Caco-2 (cell line): ENCODE measurements at regions of chr5 and their contacts with region 1.

Region 1: GRCh38 chr5:151825445-151825844 is 53.7 kb downstream of the G3BP1 start:
- DNase-seq: peak; percentile 70
- H3K4me3 ChIP-seq: no peak overlapping the region
- H3K4me3 Mint-ChIP-seq: no peak overlapping the region
- H3K27ac Mint-ChIP-seq: no peak overlapping the region
- H3K4me1 ChIP-seq: no peaks in the 10 kb centered on the region
- H3K4me1 Mint-ChIP-seq: no peaks in the 10 kb centered on the region
- H3K27me3 ChIP-seq: no peaks in the 10 kb centered on the region
- H3K27me3 Mint-ChIP-seq: no peaks in the 10 kb centered on the region
- CTCF ChIP-seq: peak; percentile 78 to 83

Region 2: DNA sequence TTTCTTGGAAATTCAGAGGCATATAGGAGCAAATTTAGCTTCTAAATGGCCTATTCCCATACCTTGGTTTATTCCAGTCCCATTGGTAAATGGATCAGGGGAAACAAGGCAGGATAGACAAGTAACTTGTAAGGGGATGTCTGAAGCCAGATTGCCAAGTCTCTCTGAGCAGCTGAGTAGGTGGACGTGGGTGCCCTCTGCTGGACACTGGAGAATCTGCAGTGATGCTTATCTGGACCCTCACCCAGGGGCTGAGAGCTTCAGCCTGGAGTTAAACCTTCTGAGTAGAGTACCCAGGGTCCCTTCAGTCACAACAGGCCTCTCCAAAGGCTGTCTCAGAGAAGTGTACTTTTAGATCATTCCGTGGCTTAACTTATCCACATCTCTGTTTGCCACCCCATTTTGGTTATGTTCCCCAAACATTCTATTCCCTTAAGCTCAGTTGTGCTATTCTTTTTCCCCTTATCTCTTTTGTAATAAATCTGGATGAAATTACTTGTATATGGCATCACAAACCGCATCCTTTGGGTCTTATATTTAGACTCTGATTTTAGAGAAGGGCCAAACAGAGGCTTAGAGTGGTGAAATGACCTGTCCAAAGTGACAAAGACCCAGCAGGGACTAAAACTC is 317.5 kb after region 1 on chr5:
- CTCF ChIA-PET with region 1: interaction called, 32 read pairs
- POLR2A ChIA-PET with region 1: no interaction called
- intact Hi-C with region 1: loop called (anchors 5 kb)
- DNase-seq: peak; percentile 61 to 75
- H3K4me3 ChIP-seq: no peak overlapping the region
- H3K4me3 Mint-ChIP-seq: no peak overlapping the region
- H3K27ac Mint-ChIP-seq: no peak overlapping the region
- H3K4me1 ChIP-seq: no peaks in the 10 kb centered on the region
- H3K4me1 Mint-ChIP-seq: no peaks in the 10 kb centered on the region
- H3K27me3 ChIP-seq: no peaks in the 10 kb centered on the region; the same call in 1 of the 2 replicates
- H3K27me3 Mint-ChIP-seq: peaks cover 8% of the 10 kb centered on the region
- CTCF ChIP-seq: peak; percentile 78 to 93

Region 3: DNA sequence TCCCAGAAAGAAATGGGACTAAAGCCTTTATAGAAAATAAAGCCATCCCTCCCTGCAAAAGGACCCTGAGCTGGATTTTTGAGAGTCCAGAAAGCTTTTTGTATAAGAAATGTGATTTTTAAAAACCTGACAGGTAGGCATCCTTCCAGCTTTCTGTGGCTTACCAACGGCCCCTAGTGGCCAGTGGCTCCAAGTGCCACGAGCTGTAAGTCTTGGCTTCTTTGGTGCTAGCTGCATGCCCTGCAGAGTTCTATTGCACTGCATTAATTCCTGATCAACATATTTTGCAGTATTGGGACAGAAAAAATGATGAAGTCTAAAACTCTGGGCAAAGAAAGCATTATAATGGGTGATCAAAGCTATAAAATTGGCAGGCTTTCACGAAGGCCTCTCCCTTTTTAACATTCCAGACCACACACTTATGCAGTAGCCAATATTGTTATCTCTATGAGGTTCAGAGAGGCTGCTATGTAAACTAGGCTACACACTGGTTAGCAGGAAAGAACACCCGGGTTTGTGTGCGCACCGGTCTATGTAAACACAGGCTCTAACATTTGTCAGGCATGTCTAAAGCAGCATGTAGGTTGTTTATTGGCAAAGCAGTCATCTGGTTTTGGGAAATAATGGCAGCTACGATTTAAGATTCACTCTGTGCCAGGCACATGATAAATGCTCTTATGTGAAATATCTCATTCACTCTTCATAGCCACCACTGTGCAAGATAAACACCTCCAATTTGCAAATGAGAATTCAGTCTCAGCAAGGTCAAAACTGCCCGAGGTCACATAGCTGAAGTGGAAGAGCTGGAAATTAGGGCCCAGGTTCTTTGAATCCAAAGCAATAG is 524.5 kb after region 1 on chr5:
- CTCF ChIA-PET with region 1: interaction called, 33 read pairs
- POLR2A ChIA-PET with region 1: interaction called, 3 read pairs
- intact Hi-C with region 1: loop called (anchors 1 kb)
- DNase-seq: peak; percentile 60 to 66
- H3K4me3 ChIP-seq: no peak overlapping the region
- H3K4me3 Mint-ChIP-seq: no peak overlapping the region
- H3K27ac Mint-ChIP-seq: no peak overlapping the region
- H3K4me1 ChIP-seq: peaks cover 9% of the 10 kb centered on the region
- H3K4me1 Mint-ChIP-seq: peaks cover 6% of the 10 kb centered on the region
- H3K27me3 ChIP-seq: no peaks in the 10 kb centered on the region
- H3K27me3 Mint-ChIP-seq: no peaks in the 10 kb centered on the region
- CTCF ChIP-seq: peak; percentile 89 to 94

Region 4: GRCh38 chr5:152505442-152506042 is 680.1 kb after region 1 on chr5:
- CTCF ChIA-PET with region 1: no interaction called
- POLR2A ChIA-PET with region 1: no interaction called
- intact Hi-C with region 1: loop called (anchors 1 kb)
- DNase-seq: peak; percentile 58 to 61
- H3K4me3 ChIP-seq: no peak overlapping the region
- H3K4me3 Mint-ChIP-seq: no peak overlapping the region
- H3K27ac Mint-ChIP-seq: no peak overlapping the region
- H3K4me1 ChIP-seq: no peaks in the 10 kb centered on the region
- H3K4me1 Mint-ChIP-seq: no peaks in the 10 kb centered on the region
- H3K27me3 ChIP-seq: no peaks in the 10 kb centered on the region
- H3K27me3 Mint-ChIP-seq: peaks cover 11% of the 10 kb centered on the region
- CTCF ChIP-seq: peak; percentile 51 to 59

Region 5: GRCh38 chr5:152514827-152515397 is 689.5 kb after region 1 on chr5:
- CTCF ChIA-PET with region 1: interaction called, 11 read pairs
- POLR2A ChIA-PET with region 1: no interaction called
- intact Hi-C with region 1: loop called (anchors 1 kb)
- DNase-seq: peak in 1 of 2 experiments; percentile 28
- H3K4me3 ChIP-seq: no peak overlapping the region
- H3K4me3 Mint-ChIP-seq: no peak overlapping the region
- H3K27ac Mint-ChIP-seq: no peak overlapping the region
- H3K4me1 ChIP-seq: no peaks in the 10 kb centered on the region
- H3K4me1 Mint-ChIP-seq: no peaks in the 10 kb centered on the region
- H3K27me3 ChIP-seq: no peaks in the 10 kb centered on the region; the same call in 1 of the 2 replicates
- H3K27me3 Mint-ChIP-seq: peaks cover 16% of the 10 kb centered on the region
- CTCF ChIP-seq: peak; percentile 45 to 65